Naive thymus-derived CD4-positive, alpha-beta T cell (primary cell): ENCODE measurements at regions of chr12 and their contacts with region 1.

Region 1: GRCh38 chr12:27243804-27244683 is at the start of gene STK38L:
- DNase-seq: peak; percentile 94 to 98 (median 96)
- ATAC-seq: peak; percentile 98
- H3K4me3 ChIP-seq: peak within 1 kb of the TSS; percentile 84
- H3K4me3 Mint-ChIP-seq: peak within 1 kb of the TSS; percentile 97 to 100 (median 99)
- H3K27ac ChIP-seq: peak within 1 kb of the TSS; percentile 82
- H3K27ac Mint-ChIP-seq: peak within 1 kb of the TSS; percentile 92 to 99 (median 97)
- H3K4me1 ChIP-seq: peaks cover 12 to 13% of the 10 kb centered on the region in 2 donors
- H3K4me1 Mint-ChIP-seq: peaks cover 17 to 62% (median 51%) of the 10 kb centered on the region in 7 donors
- H3K27me3 ChIP-seq: no peaks in the 10 kb centered on the region
- H3K27me3 Mint-ChIP-seq: no peaks in the 10 kb centered on the region
- total RNA-seq, gene STK38L: 16.2 to 22.8 (median 21.2) TPM

Region 2: DNA sequence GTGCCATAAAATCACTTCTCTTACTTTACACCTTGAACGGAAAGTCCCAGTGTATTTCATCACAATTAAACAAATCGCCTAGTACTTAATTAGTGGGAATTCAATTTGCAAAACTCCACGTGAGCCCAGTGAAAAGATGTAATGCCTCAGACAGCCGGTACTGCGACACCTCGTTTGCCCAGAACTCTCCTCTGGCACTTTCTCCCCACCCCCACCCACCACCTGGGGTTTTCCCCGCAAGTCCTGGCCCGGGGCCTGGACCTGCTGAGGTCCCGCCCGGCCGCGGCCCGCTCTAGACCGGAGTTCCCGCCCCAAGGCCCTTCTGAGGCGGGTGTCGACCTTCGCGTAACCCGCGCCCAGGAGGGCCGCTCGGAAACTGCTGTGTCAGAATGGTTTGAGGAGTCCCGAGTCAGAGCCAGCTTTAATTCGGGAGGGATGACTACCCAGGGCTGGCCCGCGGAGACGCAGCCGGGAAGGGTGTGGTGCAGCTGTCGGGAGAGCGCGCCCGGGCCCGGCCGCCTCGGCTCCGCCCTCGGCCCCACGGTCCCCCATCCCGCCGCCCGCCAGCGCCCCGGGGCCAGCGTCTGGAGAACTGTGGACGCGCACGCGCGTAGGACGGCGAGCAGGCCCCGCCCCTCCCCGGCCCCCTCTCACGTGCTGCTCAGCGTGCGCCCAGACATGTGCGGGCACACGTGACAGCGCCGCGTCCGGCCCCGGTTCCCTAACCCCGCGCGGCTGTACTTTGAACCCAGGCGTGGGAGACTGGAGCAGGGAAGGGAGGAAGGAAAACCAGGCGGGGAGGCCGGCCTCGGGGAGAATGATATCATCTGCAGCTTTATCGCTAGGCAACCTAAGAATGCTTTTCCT is 1130.0 kb before region 1 on chr12:
- CTCF ChIA-PET with region 1: no interaction called
- POLR2A ChIA-PET with region 1: no interaction called
- intact Hi-C with region 1: loop called in 1 of 2 experiments (anchors 2 kb)
- DNase-seq: peak; percentile 48 to 70 (median 65)
- ATAC-seq: peak; percentile 88
- H3K4me3 ChIP-seq: peak overlapping the region; percentile 53
- H3K4me3 Mint-ChIP-seq: peak overlapping the region; percentile 72 to 90 (median 82)
- H3K27ac ChIP-seq: peak overlapping the region; percentile 54
- H3K27ac Mint-ChIP-seq: peak overlapping the region in 7 of 9 donors; percentile 44 to 83 (median 63)
- H3K4me1 ChIP-seq: peaks cover 0 to 5% of the 10 kb centered on the region in 2 donors
- H3K4me1 Mint-ChIP-seq: peaks cover 5 to 14% (median 8%) of the 10 kb centered on the region in 7 donors
- H3K27me3 ChIP-seq: no peaks in the 10 kb centered on the region
- H3K27me3 Mint-ChIP-seq: peaks cover 2 to 80% (median 32%) of the 10 kb centered on the region in 5 donors

Region 3: GRCh38 chr12:27142101-27142721 is 101.8 kb before region 1 on chr12:
- CTCF ChIA-PET with region 1: no interaction called
- POLR2A ChIA-PET with region 1: no interaction called
- intact Hi-C with region 1: loop called (anchors 2 kb)
- DNase-seq: peak in 7 of 9 donors; percentile 7 to 32 (median 15)
- ATAC-seq: peak; percentile 80
- H3K4me3 ChIP-seq: no peak overlapping the region
- H3K4me3 Mint-ChIP-seq: no peak overlapping the region
- H3K27ac ChIP-seq: no peak overlapping the region
- H3K27ac Mint-ChIP-seq: no peak overlapping the region
- H3K4me1 ChIP-seq: no peaks in the 10 kb centered on the region
- H3K4me1 Mint-ChIP-seq: peaks cover 1 to 30% (median 11%) of the 10 kb centered on the region in 7 donors
- H3K27me3 ChIP-seq: no peaks in the 10 kb centered on the region
- H3K27me3 Mint-ChIP-seq: peaks cover 0 to 5% (median 0%) of the 10 kb centered on the region in 5 donors

Region 4: GRCh38 chr12:27185234-27186021 is 58.6 kb before region 1 on chr12:
- CTCF ChIA-PET with region 1: no interaction called
- POLR2A ChIA-PET with region 1: no interaction called
- intact Hi-C with region 1: loop called in 1 of 2 experiments (anchors 2 kb)
- DNase-seq: peak in 7 of 9 donors; percentile 9 to 36 (median 20)
- ATAC-seq: peak; percentile 78
- H3K4me3 ChIP-seq: no peak overlapping the region
- H3K4me3 Mint-ChIP-seq: peak overlapping the region in 1 of 10 donors; percentile 43
- H3K27ac ChIP-seq: no peak overlapping the region
- H3K27ac Mint-ChIP-seq: peak overlapping the region in 4 of 9 donors; percentile 17 to 71 (median 52)
- H3K4me1 ChIP-seq: peaks cover 0 to 6% of the 10 kb centered on the region in 2 donors
- H3K4me1 Mint-ChIP-seq: peaks cover 2 to 17% (median 7%) of the 10 kb centered on the region in 7 donors
- H3K27me3 ChIP-seq: no peaks in the 10 kb centered on the region
- H3K27me3 Mint-ChIP-seq: no peaks in the 10 kb centered on the region

Region 5: DNA sequence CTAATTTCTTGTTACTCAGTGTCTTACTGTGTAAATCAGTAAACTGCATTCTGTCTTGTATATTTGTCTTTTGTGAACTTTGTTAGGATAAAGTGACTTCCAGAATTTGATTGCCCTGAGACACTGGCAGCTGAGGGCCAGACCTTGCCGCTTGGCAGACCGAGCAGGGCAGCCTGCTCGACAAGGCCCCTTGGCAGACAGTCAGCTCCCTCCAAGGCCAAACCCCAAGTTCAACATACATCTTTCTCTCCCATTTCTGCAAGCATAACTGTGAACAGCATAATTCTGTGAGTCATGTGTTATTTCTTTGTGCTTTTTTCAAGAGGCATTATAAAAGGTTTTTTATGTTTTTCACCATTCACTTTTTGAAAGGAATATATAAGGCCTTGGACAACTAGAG is 49.4 kb after region 1 on chr12:
- CTCF ChIA-PET with region 1: no interaction called
- POLR2A ChIA-PET with region 1: no interaction called
- intact Hi-C with region 1: no loop called
- DNase-seq: no peak
- ATAC-seq: no peak
- H3K4me3 ChIP-seq: no peak overlapping the region
- H3K4me3 Mint-ChIP-seq: no peak overlapping the region
- H3K27ac ChIP-seq: no peak overlapping the region
- H3K27ac Mint-ChIP-seq: peak overlapping the region in 1 of 9 donors; percentile 37
- H3K4me1 ChIP-seq: no peaks in the 10 kb centered on the region
- H3K4me1 Mint-ChIP-seq: peaks cover 2 to 17% (median 7%) of the 10 kb centered on the region in 7 donors
- H3K27me3 ChIP-seq: no peaks in the 10 kb centered on the region
- H3K27me3 Mint-ChIP-seq: no peaks in the 10 kb centered on the region

Region 6: GRCh38 chr12:27332407-27333301 is 88.6 kb after region 1 on chr12 and contains the start of gene BMAL2:
- CTCF ChIA-PET with region 1: no interaction called
- POLR2A ChIA-PET with region 1: no interaction called
- intact Hi-C with region 1: loop called in 1 of 2 experiments (anchors 2 kb)
- DNase-seq: peak in 8 of 9 donors; percentile 12 to 70 (median 16)
- ATAC-seq: peak; percentile 62
- H3K4me3 ChIP-seq: peak within 1 kb of the TSS; percentile 46
- H3K4me3 Mint-ChIP-seq: peak within 1 kb of the TSS; percentile 80 to 97 (median 88)
- H3K27ac ChIP-seq: no peak within 1 kb of the TSS
- H3K27ac Mint-ChIP-seq: peak within 1 kb of the TSS in 1 of 9 donors; percentile 94
- H3K4me1 ChIP-seq: peaks cover 4% of the 10 kb centered on the region in 2 donors
- H3K4me1 Mint-ChIP-seq: peaks cover 7 to 51% (median 15%) of the 10 kb centered on the region in 7 donors
- H3K27me3 ChIP-seq: peaks cover 0 to 8% of the 10 kb centered on the region in 2 donors
- H3K27me3 Mint-ChIP-seq: peaks cover 7 to 48% (median 46%) of the 10 kb centered on the region in 5 donors
- total RNA-seq, gene BMAL2: 0.19 to 37.7 (median 0.41) TPM in 4 of 5 experiments, not detected in the other

Region 7: GRCh38 chr12:27710592-27711316 is 466.7 kb after region 1 on chr12 and contains the start of gene MRPS35:
- CTCF ChIA-PET with region 1: no interaction called
- POLR2A ChIA-PET with region 1: no interaction called
- intact Hi-C with region 1: loop called (anchors 1 kb)
- DNase-seq: peak; percentile 86 to 94 (median 92)
- ATAC-seq: peak; percentile 100
- H3K4me3 ChIP-seq: peak within 1 kb of the TSS; percentile 98
- H3K4me3 Mint-ChIP-seq: peak within 1 kb of the TSS; percentile 94 to 100 (median 98)
- H3K27ac ChIP-seq: peak within 1 kb of the TSS; percentile 85
- H3K27ac Mint-ChIP-seq: peak within 1 kb of the TSS; percentile 91 to 100 (median 98)
- H3K4me1 ChIP-seq: peaks cover 7 to 13% of the 10 kb centered on the region in 2 donors
- H3K4me1 Mint-ChIP-seq: peaks cover 21 to 46% (median 39%) of the 10 kb centered on the region in 7 donors
- H3K27me3 ChIP-seq: no peaks in the 10 kb centered on the region
- H3K27me3 Mint-ChIP-seq: peaks cover 0 to 18% (median 0%) of the 10 kb centered on the region in 5 donors
- total RNA-seq, gene MRPS35: 19.9 to 35.7 (median 23.5) TPM